Posterior cingulate gyrus (tissue), 11 donors: ENCODE measurements at regions of chr15 and their contacts with region 1.

Region 1: GRCh38 chr15:70853821-70854666 is at the start of gene LARP6:
- DNase-seq: peak in 9 of 10 donors; percentile 52 to 95 (median 65)

Region 2: GRCh38 chr15:70892002-70892914 is 38.2 kb after region 1 on chr15 and contains the starts of genes LRRC49 and THAP10:
- intact Hi-C with region 1: loop called (anchors 2 kb)
- DNase-seq: peak; percentile 77 to 98 (median 89)